ENCODE measurements at regions of chr5 and their contacts with region 1.

Region 1: GRCh38 chr5:45038366-45038987 is 229.7 kb downstream of the MRPS30 start:
- DNase-seq: peak; percentile 61
- H3K4me3 Mint-ChIP-seq: no peak overlapping the region
- H3K27ac Mint-ChIP-seq: no peak overlapping the region
- H3K4me1 Mint-ChIP-seq: no peaks in the 10 kb centered on the region
- H3K27me3 Mint-ChIP-seq: no peaks in the 10 kb centered on the region
- CTCF ChIP-seq: peak; percentile 68

Region 2: GRCh38 chr5:44862808-44863207 is 175.7 kb before region 1 on chr5:
- CTCF ChIA-PET with region 1: interaction called, 3 read pairs
- POLR2A ChIA-PET with region 1: interaction called, 3 read pairs
- intact Hi-C with region 1: loop called (anchors 2 kb)
- DNase-seq: peak; percentile 36
- H3K4me3 Mint-ChIP-seq: no peak overlapping the region
- H3K27ac Mint-ChIP-seq: no peak overlapping the region
- H3K4me1 Mint-ChIP-seq: no peaks in the 10 kb centered on the region
- H3K27me3 Mint-ChIP-seq: no peaks in the 10 kb centered on the region
- CTCF ChIP-seq: peak; percentile 49

Region 3: DNA sequence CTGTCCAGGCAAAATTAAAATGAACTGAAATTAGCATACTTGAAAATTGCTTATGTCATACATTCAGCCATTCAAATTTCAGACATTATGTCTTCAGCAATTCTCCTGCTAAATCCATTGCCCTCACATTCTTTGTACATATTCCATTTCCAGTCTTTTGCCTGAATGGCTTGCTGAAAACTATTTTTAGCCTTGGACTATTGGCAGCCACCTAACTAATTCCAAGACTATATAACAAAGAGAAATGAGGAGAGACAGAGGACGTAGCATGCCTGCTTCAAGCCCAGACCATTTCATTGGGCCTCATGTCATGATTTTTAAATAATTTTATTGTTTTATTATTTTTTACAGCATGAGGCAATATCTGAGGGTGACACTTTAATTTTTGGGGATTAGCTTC is 129.5 kb before region 1 on chr5:
- CTCF ChIA-PET with region 1: no interaction called
- POLR2A ChIA-PET with region 1: no interaction called
- intact Hi-C with region 1: no loop called
- DNase-seq: no peak
- H3K4me3 Mint-ChIP-seq: no peak overlapping the region
- H3K27ac Mint-ChIP-seq: no peak overlapping the region
- H3K4me1 Mint-ChIP-seq: no peaks in the 10 kb centered on the region
- H3K27me3 Mint-ChIP-seq: no peaks in the 10 kb centered on the region
- CTCF ChIP-seq: no peak

Region 4: GRCh38 chr5:45521067-45521466 is 482.6 kb after region 1 on chr5:
- CTCF ChIA-PET with region 1: interaction called, 3 read pairs
- POLR2A ChIA-PET with region 1: no interaction called
- intact Hi-C with region 1: loop called (anchors 1 kb)
- DNase-seq: peak; percentile 74
- H3K4me3 Mint-ChIP-seq: no peak overlapping the region
- H3K27ac Mint-ChIP-seq: no peak overlapping the region
- H3K4me1 Mint-ChIP-seq: no peaks in the 10 kb centered on the region
- H3K27me3 Mint-ChIP-seq: no peaks in the 10 kb centered on the region
- CTCF ChIP-seq: peak; percentile 75

Region 5: GRCh38 chr5:45639038-45639437 is 600.6 kb after region 1 on chr5:
- CTCF ChIA-PET with region 1: interaction called, 15 read pairs
- POLR2A ChIA-PET with region 1: no interaction called
- intact Hi-C with region 1: loop called (anchors 1 kb)
- DNase-seq: peak; percentile 7
- H3K4me3 Mint-ChIP-seq: no peak overlapping the region
- H3K27ac Mint-ChIP-seq: no peak overlapping the region
- H3K4me1 Mint-ChIP-seq: peaks cover 11% of the 10 kb centered on the region
- H3K27me3 Mint-ChIP-seq: no peaks in the 10 kb centered on the region
- CTCF ChIP-seq: peak; percentile 34

Region 6: GRCh38 chr5:45774528-45774927 is 736.1 kb after region 1 on chr5:
- CTCF ChIA-PET with region 1: interaction called, 51 read pairs
- POLR2A ChIA-PET with region 1: interaction called, 3 read pairs
- intact Hi-C with region 1: loop called (anchors 2 kb)
- DNase-seq: peak; percentile 24
- H3K4me3 Mint-ChIP-seq: no peak overlapping the region
- H3K27ac Mint-ChIP-seq: no peak overlapping the region
- H3K4me1 Mint-ChIP-seq: no peaks in the 10 kb centered on the region
- H3K27me3 Mint-ChIP-seq: no peaks in the 10 kb centered on the region
- CTCF ChIP-seq: peak; percentile 50